H1 (cell line): ENCODE measurements at regions of chr9 and their contacts with region 1.

Region 1: GRCh38 chr9:35616681-35617459 is 1.3 kb downstream of the CD72 start:
- DNase-seq: peak in 1 of 2 experiments; percentile 82
- H3K4me3 ChIP-seq: peak overlapping the region; percentile 44 to 69 (median 50)
- H3K27ac ChIP-seq: no peak overlapping the region
- H3K4me1 ChIP-seq: peaks cover 0 to 9% (median 5%) of the 10 kb centered on the region in 4 experiments; a peak in 4 of 7 replicates
- H3K27me3 ChIP-seq: peaks cover 0 to 18% (median 14%) of the 10 kb centered on the region in 4 experiments; a peak in 4 of 7 replicates
- CTCF ChIP-seq: peak in 2 of 3 experiments; percentile 18 to 33; a peak in 3 of 4 replicates
- EP300 ChIP-seq: no peak
- POLR2A ChIP-seq: peak in 1 of 2 experiments; percentile 78; a peak in 2 of 3 replicates
- RAD21 ChIP-seq: no peak; a peak in 1 of 4 replicates

Region 2: GRCh38 chr9:35470894-35471293 is 146.0 kb before region 1 on chr9:
- CTCF ChIA-PET with region 1: no interaction called
- POLR2A ChIA-PET with region 1: no interaction called
- DNase-seq: no peak
- H3K4me3 ChIP-seq: no peak overlapping the region
- H3K27ac ChIP-seq: no peak overlapping the region
- H3K4me1 ChIP-seq: no peaks in the 10 kb centered on the region
- H3K27me3 ChIP-seq: no peaks in the 10 kb centered on the region
- CTCF ChIP-seq: no peak
- EP300 ChIP-seq: no peak
- POLR2A ChIP-seq: no peak
- RAD21 ChIP-seq: no peak

Region 3: DNA sequence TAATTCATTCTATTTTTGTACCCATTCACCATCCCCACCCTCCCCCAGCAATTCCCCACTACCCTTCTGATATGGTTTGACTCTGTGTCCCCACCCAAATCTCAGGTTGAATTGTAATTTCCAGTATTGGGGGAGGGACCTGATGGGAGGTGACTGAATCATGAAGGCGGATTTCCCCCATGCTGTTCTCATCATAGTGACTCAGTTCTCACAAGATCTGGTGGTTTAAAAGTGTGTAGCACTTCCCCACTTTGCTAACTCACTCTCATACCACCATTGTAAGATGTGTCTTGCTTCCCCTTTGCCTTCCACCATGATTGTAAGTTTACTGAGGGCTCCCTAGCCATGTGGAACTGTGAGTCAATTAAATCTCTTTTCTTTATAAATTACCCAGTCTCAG is 37.7 kb before region 1 on chr9:
- CTCF ChIA-PET with region 1: no interaction called
- POLR2A ChIA-PET with region 1: no interaction called
- DNase-seq: no peak
- H3K4me3 ChIP-seq: no peak overlapping the region
- H3K27ac ChIP-seq: no peak overlapping the region
- H3K4me1 ChIP-seq: 0 out of 7 replicates have a peak, but pooled peaks cover 0 to 3% (median 0%) of the 10 kb centered on the region in 4 experiments
- H3K27me3 ChIP-seq: no peaks in the 10 kb centered on the region
- CTCF ChIP-seq: no peak
- EP300 ChIP-seq: no peak
- POLR2A ChIP-seq: no peak
- RAD21 ChIP-seq: no peak

Region 4: GRCh38 chr9:35603987-35604577 is 12.8 kb before region 1 on chr9:
- CTCF ChIA-PET with region 1: interaction called, 21 read pairs
- POLR2A ChIA-PET with region 1: interaction called, 6 read pairs
- DNase-seq: peak; percentile 98 to 100
- H3K4me3 ChIP-seq: peak overlapping the region; percentile 55 to 76 (median 66)
- H3K27ac ChIP-seq: no peak overlapping the region
- H3K4me1 ChIP-seq: peaks cover 0 to 15% (median 9%) of the 10 kb centered on the region in 4 experiments; a peak in 6 of 7 replicates
- H3K27me3 ChIP-seq: no peaks in the 10 kb centered on the region
- CTCF ChIP-seq: peak; percentile 77 to 86 (median 84)
- EP300 ChIP-seq: no peak; a peak in 1 of 3 replicates
- POLR2A ChIP-seq: peak in 1 of 2 experiments; percentile 60; a peak in 2 of 3 replicates
- RAD21 ChIP-seq: peak; percentile 55 to 70

Region 5: GRCh38 chr9:35872505-35872904 is 255.6 kb after region 1 on chr9:
- CTCF ChIA-PET with region 1: no interaction called
- POLR2A ChIA-PET with region 1: no interaction called
- DNase-seq: no peak
- H3K4me3 ChIP-seq: no peak overlapping the region
- H3K27ac ChIP-seq: no peak overlapping the region
- H3K4me1 ChIP-seq: peaks cover 0 to 8% (median 6%) of the 10 kb centered on the region in 4 experiments; a peak in 6 of 7 replicates
- H3K27me3 ChIP-seq: peaks cover 0 to 2% (median 0%) of the 10 kb centered on the region in 4 experiments; a peak in 1 of 7 replicates
- CTCF ChIP-seq: no peak
- EP300 ChIP-seq: no peak
- POLR2A ChIP-seq: no peak
- RAD21 ChIP-seq: no peak